ENCODE measurements at regions of chr15 and their contacts with region 1.

Region 1: GRCh38 chr15:67085818-67086636 is 20.6 kb downstream of the SMAD3 start:
- DNase-seq: peak; percentile 40
- H3K4me3 Mint-ChIP-seq: peak overlapping the region; percentile 72
- H3K27ac Mint-ChIP-seq: peak overlapping the region; percentile 98
- H3K4me1 Mint-ChIP-seq: peaks cover 100% of the 10 kb centered on the region
- H3K27me3 Mint-ChIP-seq: no peaks in the 10 kb centered on the region

Region 2: GRCh38 chr15:67024314-67024997 is 61.6 kb before region 1 on chr15:
- intact Hi-C with region 1: loop called (anchors 1 kb)
- DNase-seq: no peak
- H3K4me3 Mint-ChIP-seq: peak overlapping the region; percentile 29
- H3K27ac Mint-ChIP-seq: peak overlapping the region; percentile 37
- H3K4me1 Mint-ChIP-seq: peaks cover 45% of the 10 kb centered on the region
- H3K27me3 Mint-ChIP-seq: peaks cover 9% of the 10 kb centered on the region

Region 3: DNA sequence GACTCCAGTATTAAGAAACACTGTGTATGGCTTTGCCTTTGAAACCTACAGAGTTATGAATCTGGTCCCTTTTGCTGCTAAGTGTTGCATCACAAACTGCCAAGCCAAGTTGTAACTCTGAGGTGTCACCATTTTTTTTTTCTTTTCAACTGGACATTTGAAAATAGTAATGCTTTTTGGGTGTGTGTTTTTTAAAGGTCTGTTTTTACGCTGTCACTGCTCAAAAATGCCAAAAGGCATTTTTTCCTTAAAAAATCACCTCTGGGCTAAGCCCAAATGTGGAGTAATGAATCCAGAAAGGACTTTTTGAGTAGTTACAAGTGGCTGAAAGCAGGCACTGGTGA is 11.2 kb before region 1 on chr15:
- intact Hi-C with region 1: loop called (anchors 1 kb)
- DNase-seq: no peak
- H3K4me3 Mint-ChIP-seq: peak overlapping the region; percentile 58
- H3K27ac Mint-ChIP-seq: peak overlapping the region; percentile 95
- H3K4me1 Mint-ChIP-seq: peaks cover 83% of the 10 kb centered on the region
- H3K27me3 Mint-ChIP-seq: no peaks in the 10 kb centered on the region

Region 4: DNA sequence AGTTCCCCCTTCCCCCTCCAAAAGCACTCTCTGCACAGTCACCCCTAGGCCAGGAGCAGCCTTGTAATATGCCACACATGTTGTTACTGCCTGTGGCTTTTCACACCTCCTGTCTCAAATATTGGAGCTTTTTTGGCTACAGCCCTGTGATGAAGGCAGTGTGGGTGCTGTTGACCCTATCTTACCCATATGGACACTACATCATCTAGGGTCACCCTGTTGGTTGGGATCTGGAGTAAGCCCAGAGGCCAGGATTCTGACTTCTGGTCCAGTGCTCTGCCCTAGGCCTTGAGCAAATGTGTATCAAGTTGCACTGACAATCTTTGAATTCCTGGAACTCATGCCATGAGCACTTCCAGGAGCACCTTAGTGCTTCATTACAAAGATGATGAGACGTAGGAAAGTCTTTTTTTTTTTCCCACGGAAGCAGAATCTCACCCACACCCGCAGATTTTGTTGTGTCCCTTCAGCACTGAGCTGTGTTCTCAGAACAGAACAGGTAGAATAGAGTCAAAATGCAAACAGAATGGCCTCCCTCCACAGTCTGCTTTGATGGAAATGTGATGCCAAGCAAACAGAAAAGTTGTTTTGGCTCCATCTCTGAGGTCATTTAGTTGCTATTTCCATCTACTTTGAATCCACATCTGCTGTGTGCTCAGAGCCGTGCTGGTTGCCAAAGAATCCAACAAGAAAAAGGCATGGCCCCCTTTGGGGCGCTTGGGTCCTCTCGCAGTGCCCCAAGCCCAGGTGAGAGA is 29.0 kb after region 1 on chr15:
- intact Hi-C with region 1: loop called (anchors 1 kb)
- DNase-seq: no peak
- H3K4me3 Mint-ChIP-seq: peak overlapping the region; percentile 38
- H3K27ac Mint-ChIP-seq: peak overlapping the region; percentile 97
- H3K4me1 Mint-ChIP-seq: peaks cover 95% of the 10 kb centered on the region
- H3K27me3 Mint-ChIP-seq: no peaks in the 10 kb centered on the region

Region 5: GRCh38 chr15:67134067-67134838 is 48.2 kb after region 1 on chr15:
- intact Hi-C with region 1: loop called (anchors 1 kb)
- DNase-seq: peak; percentile 69
- H3K4me3 Mint-ChIP-seq: peak overlapping the region; percentile 86
- H3K27ac Mint-ChIP-seq: peak overlapping the region; percentile 98
- H3K4me1 Mint-ChIP-seq: peaks cover 100% of the 10 kb centered on the region
- H3K27me3 Mint-ChIP-seq: no peaks in the 10 kb centered on the region

Region 6: DNA sequence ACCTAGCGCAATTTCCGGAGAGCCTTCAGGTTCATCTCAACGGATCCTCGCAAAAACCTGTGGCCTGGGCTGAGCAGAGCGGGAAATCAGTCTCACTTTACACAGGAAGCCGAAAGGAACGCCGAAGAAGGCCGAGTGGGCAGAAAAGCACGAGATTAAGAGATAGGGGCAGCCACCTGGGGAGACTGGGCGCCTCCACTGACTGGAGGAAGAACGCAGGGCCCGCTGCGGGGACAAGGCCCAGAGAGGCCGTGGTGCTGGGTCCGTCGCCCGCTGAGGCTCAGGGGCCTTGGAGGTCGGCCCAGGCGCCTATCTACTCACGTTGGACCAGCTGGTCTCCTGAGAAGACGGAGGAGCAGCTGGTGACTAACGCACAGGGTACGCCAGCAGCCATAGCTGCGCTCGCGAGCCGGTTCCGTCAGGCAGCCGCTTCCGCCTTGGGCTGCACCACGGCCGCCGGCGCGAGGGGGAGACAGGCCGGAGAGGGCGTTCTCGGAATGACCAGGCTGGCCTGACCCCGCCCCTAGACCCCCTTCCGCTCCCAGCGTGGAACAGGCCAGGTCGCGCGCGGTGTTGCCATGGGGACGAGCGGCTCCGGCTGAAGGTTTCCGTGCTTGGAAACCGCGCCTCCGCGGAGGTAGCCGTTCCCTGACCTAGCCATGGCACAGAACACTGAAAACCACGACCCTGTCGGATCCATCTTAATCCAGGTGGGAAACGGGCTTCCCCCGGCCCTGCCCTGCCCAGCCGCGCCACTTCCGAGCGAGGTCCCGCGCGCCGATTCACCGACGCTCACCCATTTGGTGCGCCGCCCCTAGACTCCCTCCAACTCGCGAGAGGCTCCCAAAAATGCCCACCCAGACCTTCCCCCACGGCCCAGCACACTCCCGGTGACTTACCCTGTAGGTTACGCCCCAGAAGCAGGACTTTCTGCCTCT is 168.5 kb after region 1 on chr15 and contains the starts of genes AAGAB and IQCH:
- intact Hi-C with region 1: loop called (anchors 1 kb)
- DNase-seq: peak; percentile 98
- H3K4me3 Mint-ChIP-seq: peak within 1 kb of the TSS; percentile 100
- H3K27ac Mint-ChIP-seq: peak within 1 kb of the TSS; percentile 98
- H3K4me1 Mint-ChIP-seq: peaks cover 36% of the 10 kb centered on the region
- H3K27me3 Mint-ChIP-seq: peaks cover 18% of the 10 kb centered on the region
- total RNA-seq, gene AAGAB: 41.7 and 44.0 TPM in 2 replicates
- total RNA-seq, gene IQCH: 0.88 and 1.2 TPM in 2 replicates